ENCODE measurements at regions of chr9 and their contacts with region 1.

Region 1: DNA sequence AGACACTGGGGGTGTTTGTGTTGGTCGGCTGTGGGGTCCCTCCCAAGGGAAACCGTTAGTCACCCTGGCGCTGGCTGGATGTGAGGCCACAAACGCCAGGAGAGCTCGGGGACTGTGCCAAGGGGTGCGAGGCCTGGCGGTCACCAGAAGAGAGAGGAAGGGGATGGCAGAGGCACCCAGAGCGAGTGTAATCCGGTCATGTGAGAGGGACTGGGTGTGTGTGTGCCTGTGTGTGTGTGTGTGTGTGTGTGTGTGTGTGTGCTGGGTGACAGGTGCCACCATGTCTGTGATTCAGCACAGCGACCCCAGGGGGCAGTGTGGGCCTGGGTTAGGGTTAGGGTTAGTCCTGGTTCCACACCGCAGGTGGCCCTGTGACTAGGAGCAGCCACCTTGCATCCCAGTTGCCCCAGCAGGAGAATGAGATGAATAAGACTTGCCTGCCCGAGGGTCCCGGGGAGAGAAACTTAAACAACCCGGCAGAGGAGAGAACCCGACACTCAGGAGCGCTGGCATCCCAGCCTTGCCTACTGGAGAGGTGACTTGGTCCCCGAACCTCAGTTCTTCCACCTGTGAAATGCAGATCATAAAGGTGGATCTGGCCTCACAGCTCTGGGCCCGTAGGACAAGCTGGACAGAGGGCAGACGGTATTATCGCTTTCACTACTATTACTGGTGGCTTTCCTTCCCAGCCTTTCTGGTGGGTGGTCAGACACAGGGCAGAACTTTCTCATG is 1.4 kb upstream of the ADAMTSL2 start:
- DNase-seq: no peak

Region 2: GRCh38 chr9:133572821-133573361 is 39.8 kb after region 1 on chr9:
- intact Hi-C with region 1: loop called (anchors 5 kb)
- DNase-seq: peak; percentile 88

Region 3: GRCh38 chr9:133726401-133727276 is 193.5 kb after region 1 on chr9:
- intact Hi-C with region 1: loop called (anchors 2 kb)
- DNase-seq: peak; percentile 72